Posterior vena cava (tissue), 2 donors: ENCODE measurements at regions of chr10 and their contacts with region 1.

Region 1: DNA sequence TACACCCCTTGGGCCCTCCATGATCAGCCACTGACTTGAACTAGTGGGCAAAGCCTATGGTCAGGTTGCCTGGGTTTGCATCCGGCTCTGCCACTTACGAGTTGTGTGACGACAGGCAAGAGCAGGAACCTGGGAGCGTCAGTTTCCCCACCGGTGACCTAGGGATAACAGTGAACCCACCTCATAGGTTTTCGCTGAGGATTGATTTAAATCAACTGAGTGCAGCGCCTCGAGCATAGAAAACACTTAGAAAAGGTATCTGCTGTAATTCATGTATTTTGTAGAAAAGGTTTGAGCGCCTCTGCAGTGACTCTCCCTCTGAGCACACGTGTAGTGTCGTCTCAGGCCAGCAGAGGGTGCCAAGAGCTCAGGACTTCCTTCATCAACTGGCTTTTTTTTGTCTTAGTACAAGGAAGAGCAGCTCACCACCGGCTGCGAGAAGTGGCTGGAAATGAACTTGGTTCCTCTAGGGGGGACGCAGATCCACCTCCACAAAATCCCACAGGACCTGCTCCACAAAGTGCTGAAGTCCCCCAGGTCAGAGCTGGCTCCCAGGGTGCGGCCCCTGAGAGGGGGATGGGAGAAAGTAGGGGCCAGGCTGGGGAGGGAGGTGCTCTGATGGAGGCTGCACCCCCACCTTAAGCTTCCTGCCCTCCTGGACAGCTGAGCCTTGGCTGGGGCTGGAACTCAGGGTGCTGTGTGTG is 27.7 kb downstream of the BTBD16 start:
- DNase-seq: peak; percentile 91

Region 2: GRCh38 chr10:122342293-122343134 is 43.8 kb after region 1 on chr10:
- intact Hi-C with region 1: loop called in 1 of 2 experiments (anchors 5 kb)
- DNase-seq: no peak

Region 3: DNA sequence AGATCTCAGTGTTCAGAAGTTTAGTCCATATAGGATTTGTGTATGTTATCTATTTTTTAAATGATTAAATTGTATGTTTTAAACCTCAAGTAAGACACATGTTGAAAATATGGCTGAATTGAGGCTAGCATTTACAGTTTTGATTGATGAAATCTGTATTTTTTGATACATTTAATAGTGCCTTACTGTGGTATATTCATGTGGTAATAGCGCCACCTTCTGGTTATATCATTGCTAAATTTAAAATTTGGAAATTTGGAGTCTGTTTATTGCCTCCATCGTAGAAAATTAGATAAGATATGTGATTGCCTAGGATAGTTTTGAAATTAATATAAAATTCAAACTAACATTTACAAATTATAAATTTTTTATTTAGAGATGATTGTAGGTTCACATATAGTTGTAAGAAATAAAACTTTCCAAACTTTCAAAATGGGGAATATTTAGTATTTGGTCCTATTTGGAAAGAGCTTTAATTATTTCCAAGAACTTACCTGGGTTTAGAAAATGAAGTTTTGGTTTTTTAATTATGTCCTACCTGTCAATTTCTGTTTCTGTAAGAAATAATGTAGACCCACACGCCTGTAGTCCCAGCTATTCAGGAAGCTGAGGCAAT is 136.6 kb after region 1 on chr10:
- intact Hi-C with region 1: loop called in 1 of 2 experiments (anchors 5 kb)
- DNase-seq: no peak

Region 4: GRCh38 chr10:122565728-122566206 is 267.0 kb after region 1 on chr10:
- intact Hi-C with region 1: loop called (anchors 5 kb)
- DNase-seq: peak; percentile 92